ENCODE measurements at regions of chr10 and their contacts with region 1.

Region 1: DNA sequence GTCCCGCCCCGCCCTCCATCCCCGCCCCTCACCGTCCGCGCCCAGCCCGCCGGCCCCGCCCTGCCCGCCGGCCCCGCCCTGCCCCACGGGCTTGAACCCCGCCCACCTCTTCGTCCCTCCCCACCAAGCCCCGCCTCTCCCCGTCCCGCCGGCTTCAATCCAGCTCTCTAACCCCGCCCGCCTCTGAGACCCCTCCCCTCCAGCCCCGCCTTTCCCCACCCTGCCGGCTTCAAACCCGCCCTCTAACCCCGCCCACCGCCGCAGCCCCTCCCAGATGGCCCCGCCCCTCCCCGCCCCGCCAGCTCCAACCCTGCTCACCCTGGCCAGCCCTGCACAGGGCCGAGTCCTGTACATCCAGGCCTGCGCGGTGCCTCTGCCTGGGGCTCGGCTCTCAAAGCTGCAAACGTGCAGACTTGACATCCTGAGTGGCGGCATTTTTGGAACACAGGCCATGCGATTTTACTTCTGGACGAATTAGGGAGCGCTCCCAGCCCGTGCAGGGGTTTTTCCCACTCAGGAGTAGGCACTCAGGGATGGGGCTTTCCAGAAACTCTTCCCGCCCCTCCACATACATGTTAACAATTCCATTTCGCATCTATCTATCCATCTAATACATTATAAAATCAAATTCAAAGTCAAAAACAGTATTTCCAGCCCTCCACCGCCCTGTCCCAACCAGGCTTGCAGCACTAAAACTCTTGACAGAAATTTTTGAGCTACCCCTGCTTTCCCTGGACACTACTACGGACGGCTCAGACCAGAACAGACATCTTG is 475 bp upstream of the NMT2 start:
- DNase-seq: peak; percentile 95
- H3K4me3 Mint-ChIP-seq: peak overlapping the region; percentile 81
- H3K27ac Mint-ChIP-seq: peak overlapping the region; percentile 90
- H3K4me1 Mint-ChIP-seq: peaks cover 46% of the 10 kb centered on the region
- H3K27me3 Mint-ChIP-seq: no peaks in the 10 kb centered on the region

Region 2: DNA sequence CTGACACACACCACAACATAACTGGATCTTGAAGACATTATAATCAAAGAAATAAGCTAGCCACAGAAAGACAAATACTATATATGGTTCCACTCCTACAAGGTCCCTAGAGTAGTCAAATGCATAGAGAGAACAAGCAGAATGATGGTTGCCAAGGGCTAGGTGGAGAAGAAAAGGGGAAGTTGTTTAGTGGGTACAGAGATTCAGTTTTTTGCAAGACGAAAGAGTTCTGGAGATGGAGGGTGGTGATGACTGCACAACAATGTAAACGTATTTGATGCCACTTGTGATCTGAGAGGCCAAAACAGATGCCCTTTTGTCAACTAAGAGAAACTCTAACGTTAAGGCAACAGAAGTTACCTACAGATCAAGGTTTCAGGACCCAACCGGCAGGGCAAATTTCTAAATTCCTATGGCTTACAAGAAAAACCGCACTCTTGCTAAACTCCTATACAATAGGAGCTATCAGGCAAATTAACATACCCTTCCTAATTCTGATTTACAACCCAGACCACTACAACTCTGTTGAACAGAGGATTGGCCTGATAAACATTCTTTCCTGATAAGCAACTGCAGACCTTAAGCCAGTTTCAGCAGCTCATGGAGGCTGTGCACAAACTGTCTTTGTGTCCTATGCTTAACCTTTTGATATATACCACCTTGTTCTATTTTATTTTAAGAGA is 463.3 kb before region 1 on chr10:
- intact Hi-C with region 1: no loop called
- DNase-seq: no peak
- H3K4me3 Mint-ChIP-seq: no peak overlapping the region
- H3K27ac Mint-ChIP-seq: no peak overlapping the region
- H3K4me1 Mint-ChIP-seq: peaks cover 4% of the 10 kb centered on the region
- H3K27me3 Mint-ChIP-seq: no peaks in the 10 kb centered on the region

Region 3: DNA sequence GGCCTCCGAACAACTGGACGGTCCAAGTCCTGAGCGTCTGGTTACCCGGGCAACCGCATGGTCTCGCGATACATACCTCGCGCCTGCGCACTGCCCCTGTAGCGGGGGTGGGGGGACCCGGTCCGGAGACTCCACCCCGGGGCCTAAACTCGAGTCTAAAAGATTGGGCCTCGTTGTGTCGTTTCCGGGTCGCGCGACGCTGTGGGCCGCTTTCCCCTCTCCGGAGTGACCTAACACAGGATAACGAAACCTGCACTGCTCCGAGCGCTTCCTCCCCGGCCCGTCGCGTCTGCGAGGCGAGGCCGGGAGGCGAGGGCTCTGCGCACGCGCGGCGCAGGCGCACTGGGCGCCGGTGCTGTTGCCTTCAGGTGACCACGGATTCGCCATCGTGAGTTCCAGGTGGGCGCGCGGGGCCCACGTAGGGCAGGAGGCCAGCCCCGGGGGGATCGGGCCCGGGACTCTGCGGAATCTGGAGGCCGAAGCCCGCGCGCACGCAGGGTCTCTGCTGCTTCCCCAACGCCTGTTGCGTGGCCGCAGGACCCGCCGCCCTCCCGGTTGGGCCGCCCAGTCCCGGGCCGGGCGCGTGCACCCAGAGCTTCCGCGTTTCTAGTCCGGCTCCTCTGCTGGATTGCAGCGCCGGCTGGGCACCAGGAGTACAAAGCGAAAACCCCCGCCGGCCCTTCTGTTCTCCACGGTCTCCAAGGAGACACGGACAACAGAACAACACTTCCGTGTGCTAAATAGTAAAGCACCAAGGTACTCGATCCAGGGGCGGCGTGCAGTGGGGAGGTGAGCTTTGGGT is 71.8 kb before region 1 on chr10 and contains the start of gene RPP38:
- intact Hi-C with region 1: loop called (anchors 2 kb)
- DNase-seq: peak; percentile 98
- H3K4me3 Mint-ChIP-seq: peak within 1 kb of the TSS; percentile 95
- H3K27ac Mint-ChIP-seq: peak within 1 kb of the TSS; percentile 92
- H3K4me1 Mint-ChIP-seq: peaks cover 20% of the 10 kb centered on the region
- H3K27me3 Mint-ChIP-seq: peaks cover 2% of the 10 kb centered on the region
- total RNA-seq, gene RPP38: 22.6 and 23.3 TPM in 2 replicates

Region 4: DNA sequence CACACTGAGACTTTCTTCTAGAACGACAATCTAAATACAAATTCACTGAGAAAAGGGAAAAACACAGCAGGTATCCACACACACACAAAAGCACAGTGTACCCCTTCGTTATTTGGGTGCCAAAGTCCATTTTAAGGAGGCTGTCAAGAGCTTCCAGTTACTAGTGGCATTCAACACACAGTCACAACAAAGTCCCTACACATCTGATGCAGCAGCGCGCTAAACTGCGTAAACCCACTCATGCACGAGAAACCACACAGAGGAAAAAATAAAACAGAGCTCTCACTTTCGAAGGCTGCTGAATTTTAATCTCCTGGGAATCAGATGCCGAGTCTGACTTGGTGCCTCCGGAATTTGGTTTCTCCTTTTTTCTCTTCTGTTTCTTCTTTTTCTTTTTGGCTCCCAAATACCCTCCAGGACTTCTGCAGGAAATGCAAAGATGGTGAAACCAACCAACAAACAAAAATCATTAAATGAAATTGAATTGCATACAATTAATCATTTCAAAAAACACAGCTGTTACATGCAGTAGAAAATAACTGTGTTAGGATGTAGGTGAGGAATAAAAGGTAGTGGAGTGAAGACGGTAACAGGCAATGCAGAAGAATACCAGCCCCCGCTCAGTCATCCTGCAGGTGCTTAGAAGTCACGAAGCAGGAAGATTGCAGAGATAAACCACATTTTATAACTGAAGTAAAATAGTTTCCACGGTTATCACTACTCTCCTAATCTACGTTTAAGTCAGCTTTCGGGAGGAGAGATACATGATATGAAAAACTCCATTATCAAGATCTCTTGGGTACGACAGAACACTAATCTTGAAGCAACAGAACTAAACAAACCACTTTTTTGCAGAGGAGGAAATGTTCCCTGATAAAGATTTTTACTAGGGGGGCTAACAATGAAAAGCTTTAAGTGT is 27.6 kb before region 1 on chr10:
- intact Hi-C with region 1: loop called (anchors 1 kb)
- DNase-seq: no peak
- H3K4me3 Mint-ChIP-seq: peak overlapping the region; percentile 56
- H3K27ac Mint-ChIP-seq: peak overlapping the region; percentile 20
- H3K4me1 Mint-ChIP-seq: peaks cover 19% of the 10 kb centered on the region
- H3K27me3 Mint-ChIP-seq: no peaks in the 10 kb centered on the region

Region 5: GRCh38 chr10:15209827-15210509 is 41.0 kb after region 1 on chr10:
- intact Hi-C with region 1: loop called (anchors 1 kb)
- DNase-seq: peak; percentile 94
- H3K4me3 Mint-ChIP-seq: no peak overlapping the region
- H3K27ac Mint-ChIP-seq: no peak overlapping the region
- H3K4me1 Mint-ChIP-seq: peaks cover 46% of the 10 kb centered on the region
- H3K27me3 Mint-ChIP-seq: no peaks in the 10 kb centered on the region

Measured in activated CD4-positive, alpha-beta T cell treated with anti-CD3 and anti-CD28 coated beads, Interleukin-2, amount 10 ng/mL, durations not matched to agents 24 days and 14 days (primary cell).